Posterior cingulate gyrus (tissue), 11 donors: ENCODE measurements at regions of chr13 and their contacts with region 1.

Region 1: GRCh38 chr13:43865892-43866291 is 13.6 kb downstream of the CCDC122 start:
- DNase-seq: no peak

Region 2: GRCh38 chr13:42594970-42595571 is 1270.8 kb before region 1 on chr13:
- intact Hi-C with region 1: loop called (anchors 10 kb)
- DNase-seq: peak in 6 of 10 donors; percentile 39 to 89 (median 50)

Region 3: GRCh38 chr13:42969558-42970172 is 896.2 kb before region 1 on chr13:
- intact Hi-C with region 1: loop called (anchors 10 kb)
- DNase-seq: peak; percentile 22 to 94 (median 80)

Region 4: DNA sequence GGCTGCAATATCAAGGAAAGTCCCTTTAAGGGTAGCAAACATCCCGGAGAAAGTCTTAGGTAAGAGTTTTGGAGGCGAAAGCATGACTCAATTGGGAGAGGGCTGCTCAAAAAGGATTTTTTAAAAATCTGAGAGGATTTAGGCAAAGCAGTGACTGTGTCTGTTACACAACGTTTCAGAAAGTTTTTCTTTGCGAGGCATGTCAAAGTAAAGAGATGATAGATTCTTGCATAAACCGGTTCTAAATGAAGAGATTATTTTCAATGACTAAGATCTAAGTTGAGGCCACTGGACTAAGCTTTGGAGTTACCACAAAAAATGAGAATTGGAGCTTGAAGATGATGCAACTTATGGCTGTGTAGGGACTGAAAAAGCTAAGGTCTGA is 35.4 kb before region 1 on chr13:
- intact Hi-C with region 1: loop called (anchors 5 kb)
- DNase-seq: no peak